Activated naive CD8-positive, alpha-beta T cell treated with anti-CD3 and anti-CD28 coated beads, Interleukin-2, amount 10 ng/mL, durations not matched to agents 7 days and 5 days (primary cell): ENCODE measurements at regions of chr2 and their contacts with region 1.

Region 1: DNA sequence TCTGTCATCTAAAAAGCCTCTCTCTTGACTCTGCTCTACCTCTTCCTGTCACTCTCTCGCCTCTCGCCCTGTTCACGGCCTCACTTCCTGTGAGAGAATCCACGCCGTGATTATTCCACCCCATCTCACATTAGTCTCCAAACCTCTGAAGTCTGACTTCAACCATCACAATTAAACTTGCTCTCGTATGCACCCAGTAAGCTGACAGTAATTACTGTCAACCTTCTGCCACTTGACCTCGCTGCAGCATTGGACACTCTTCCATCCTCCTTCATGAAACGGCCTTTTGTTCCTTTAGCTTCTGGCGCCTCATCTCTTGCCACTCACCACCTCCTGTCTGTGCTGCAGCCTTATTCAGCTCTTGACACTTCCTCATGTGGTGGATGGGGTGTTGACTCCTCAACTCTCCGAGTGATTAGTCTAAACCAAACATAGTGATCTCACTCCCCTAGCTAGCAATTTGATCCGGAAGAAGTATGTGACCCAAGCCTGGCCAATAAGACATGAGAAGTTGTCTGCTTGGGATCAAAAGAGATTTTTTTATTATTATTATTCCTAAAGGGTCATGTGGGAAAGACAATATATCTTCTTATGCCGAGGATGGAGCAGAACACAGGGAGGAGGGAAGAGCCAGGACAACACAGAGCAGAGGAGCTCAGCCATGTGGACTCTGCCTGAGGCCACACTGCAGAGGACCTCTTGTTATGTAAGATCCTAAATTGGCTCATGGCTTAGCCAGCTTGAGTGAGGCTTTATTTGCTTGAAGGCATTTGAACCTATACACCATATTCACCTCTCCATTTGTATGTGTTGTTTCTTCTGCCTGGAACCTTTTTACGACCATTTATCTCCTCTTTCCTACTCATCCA is 38.4 kb upstream of the MYO1B start:
- DNase-seq: no peak
- ATAC-seq: peak; percentile 81
- H3K4me3 Mint-ChIP-seq: peak overlapping the region; percentile 63
- H3K27ac Mint-ChIP-seq: peak overlapping the region; percentile 82
- H3K4me1 Mint-ChIP-seq: peaks cover 37% of the 10 kb centered on the region
- H3K27me3 Mint-ChIP-seq: no peaks in the 10 kb centered on the region

Region 2: GRCh38 chr2:191180713-191181112 is 26.1 kb before region 1 on chr2:
- POLR2A ChIA-PET with region 1: no interaction called
- DNase-seq: no peak
- ATAC-seq: no peak
- H3K4me3 Mint-ChIP-seq: no peak overlapping the region
- H3K27ac Mint-ChIP-seq: no peak overlapping the region
- H3K4me1 Mint-ChIP-seq: peaks cover 13% of the 10 kb centered on the region
- H3K27me3 Mint-ChIP-seq: no peaks in the 10 kb centered on the region

Region 3: DNA sequence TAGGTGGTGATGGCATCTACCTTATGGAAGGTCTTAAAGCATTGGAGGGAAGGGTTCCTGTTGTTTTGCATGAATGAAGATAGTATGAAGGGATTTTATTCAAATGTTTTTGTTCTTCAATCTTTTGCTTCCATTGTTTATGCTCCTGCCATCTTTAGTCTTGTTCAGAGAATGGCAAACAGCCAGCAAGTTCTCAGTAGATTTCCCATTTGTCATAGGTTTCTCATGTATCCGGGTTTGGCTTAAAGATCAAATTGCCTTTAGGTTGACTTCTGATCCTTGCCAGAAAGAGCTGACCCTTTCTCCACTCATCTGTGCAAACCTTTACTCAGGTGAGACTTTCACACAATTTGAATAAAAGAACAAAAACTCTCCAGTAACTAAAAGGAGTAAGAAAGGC is 11.8 kb before region 1 on chr2:
- POLR2A ChIA-PET with region 1: interaction called, 10 read pairs
- DNase-seq: no peak
- ATAC-seq: no peak
- H3K4me3 Mint-ChIP-seq: no peak overlapping the region
- H3K27ac Mint-ChIP-seq: peak overlapping the region; percentile 97
- H3K4me1 Mint-ChIP-seq: peaks cover 33% of the 10 kb centered on the region
- H3K27me3 Mint-ChIP-seq: no peaks in the 10 kb centered on the region

Region 4: GRCh38 chr2:191501561-191502168 is 294.8 kb after region 1 on chr2:
- POLR2A ChIA-PET with region 1: no interaction called
- DNase-seq: no peak
- ATAC-seq: no peak
- H3K4me3 Mint-ChIP-seq: no peak overlapping the region
- H3K27ac Mint-ChIP-seq: no peak overlapping the region
- H3K4me1 Mint-ChIP-seq: no peaks in the 10 kb centered on the region
- H3K27me3 Mint-ChIP-seq: peaks cover 10% of the 10 kb centered on the region